ENCODE measurements at regions of chr2 and their contacts with region 1.

Region 1: DNA sequence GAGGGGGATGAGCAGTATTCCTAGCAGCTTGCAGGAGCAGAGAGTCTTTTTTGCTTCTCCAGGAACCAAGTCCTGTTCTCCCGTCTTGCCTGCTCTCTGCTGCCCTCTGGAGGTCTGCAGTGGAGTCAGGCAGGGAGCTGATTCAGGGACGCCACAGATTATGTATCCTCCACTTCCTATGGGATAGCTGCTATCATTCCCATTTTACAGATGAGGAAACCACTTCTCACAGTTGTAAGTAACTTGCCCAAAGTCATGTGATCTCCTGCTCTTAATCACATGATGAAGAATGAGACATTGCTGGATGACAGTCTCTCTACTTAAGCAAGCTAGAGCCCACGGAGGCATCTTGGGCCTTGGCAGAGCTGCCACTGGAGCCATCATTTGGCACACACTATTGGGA is 8.3 kb downstream of the SLC4A5 start:
- DNase-seq: peak; percentile 81

Region 2: GRCh38 chr2:74250189-74250631 is 84.7 kb before region 1 on chr2:
- intact Hi-C with region 1: loop called (anchors 5 kb)
- DNase-seq: no peak

Region 3: GRCh38 chr2:74391580-74392448 is 56.9 kb after region 1 on chr2:
- intact Hi-C with region 1: loop called (anchors 5 kb)
- DNase-seq: peak; percentile 97

Measured in cardiac septum (tissue), 1 donor.